CD8-positive, alpha-beta T cell (primary cell): ENCODE measurements at regions of chr2 and their contacts with region 1.

Region 1: GRCh38 chr2:157596992-157597681 is 31.5 kb downstream of the ACVR1C start:
- DNase-seq: peak; percentile 18 to 75 (median 57)
- ATAC-seq: peak; percentile 66
- H3K4me3 ChIP-seq: peak overlapping the region; percentile 34 to 36
- H3K4me3 Mint-ChIP-seq: peak overlapping the region; percentile 66
- H3K27ac ChIP-seq: no peak overlapping the region
- H3K27ac Mint-ChIP-seq: no peak overlapping the region
- H3K4me1 ChIP-seq: no peaks in the 10 kb centered on the region
- H3K4me1 Mint-ChIP-seq: peaks cover 10% of the 10 kb centered on the region
- H3K27me3 ChIP-seq: peaks cover 0 to 2% of the 10 kb centered on the region in 2 experiments
- H3K27me3 Mint-ChIP-seq: peaks cover 10% of the 10 kb centered on the region
- CTCF ChIP-seq: peak; percentile 72

Region 2: GRCh38 chr2:157413326-157414035 is 183.7 kb before region 1 on chr2:
- CTCF ChIA-PET with region 1: no interaction called
- POLR2A ChIA-PET with region 1: no interaction called
- intact Hi-C with region 1: no loop called
- DNase-seq: peak in 7 of 9 experiments; percentile 41 to 91 (median 64)
- ATAC-seq: peak; percentile 76
- H3K4me3 ChIP-seq: peak overlapping the region in 1 of 2 experiments; percentile 2
- H3K4me3 Mint-ChIP-seq: peak overlapping the region; percentile 44
- H3K27ac ChIP-seq: peak overlapping the region; percentile 49 to 80
- H3K27ac Mint-ChIP-seq: peak overlapping the region; percentile 91
- H3K4me1 ChIP-seq: peaks cover 95% of the 10 kb centered on the region
- H3K4me1 Mint-ChIP-seq: peaks cover 89% of the 10 kb centered on the region
- H3K27me3 ChIP-seq: no peaks in the 10 kb centered on the region
- H3K27me3 Mint-ChIP-seq: no peaks in the 10 kb centered on the region
- CTCF ChIP-seq: no peak

Region 3: GRCh38 chr2:157497638-157498314 is 99.4 kb before region 1 on chr2:
- CTCF ChIA-PET with region 1: interaction called, 19 read pairs
- POLR2A ChIA-PET with region 1: no interaction called
- intact Hi-C with region 1: loop called (anchors 1 to 2 kb)
- DNase-seq: peak in 2 of 9 experiments; percentile 49 to 62
- ATAC-seq: peak; percentile 91
- H3K4me3 ChIP-seq: no peak overlapping the region
- H3K4me3 Mint-ChIP-seq: no peak overlapping the region
- H3K27ac ChIP-seq: no peak overlapping the region
- H3K27ac Mint-ChIP-seq: no peak overlapping the region
- H3K4me1 ChIP-seq: peaks cover 7% of the 10 kb centered on the region
- H3K4me1 Mint-ChIP-seq: peaks cover 33% of the 10 kb centered on the region
- H3K27me3 ChIP-seq: no peaks in the 10 kb centered on the region
- H3K27me3 Mint-ChIP-seq: no peaks in the 10 kb centered on the region
- CTCF ChIP-seq: peak; percentile 71